ENCODE measurements at regions of chr6 and their contacts with region 1.

Region 1: DNA sequence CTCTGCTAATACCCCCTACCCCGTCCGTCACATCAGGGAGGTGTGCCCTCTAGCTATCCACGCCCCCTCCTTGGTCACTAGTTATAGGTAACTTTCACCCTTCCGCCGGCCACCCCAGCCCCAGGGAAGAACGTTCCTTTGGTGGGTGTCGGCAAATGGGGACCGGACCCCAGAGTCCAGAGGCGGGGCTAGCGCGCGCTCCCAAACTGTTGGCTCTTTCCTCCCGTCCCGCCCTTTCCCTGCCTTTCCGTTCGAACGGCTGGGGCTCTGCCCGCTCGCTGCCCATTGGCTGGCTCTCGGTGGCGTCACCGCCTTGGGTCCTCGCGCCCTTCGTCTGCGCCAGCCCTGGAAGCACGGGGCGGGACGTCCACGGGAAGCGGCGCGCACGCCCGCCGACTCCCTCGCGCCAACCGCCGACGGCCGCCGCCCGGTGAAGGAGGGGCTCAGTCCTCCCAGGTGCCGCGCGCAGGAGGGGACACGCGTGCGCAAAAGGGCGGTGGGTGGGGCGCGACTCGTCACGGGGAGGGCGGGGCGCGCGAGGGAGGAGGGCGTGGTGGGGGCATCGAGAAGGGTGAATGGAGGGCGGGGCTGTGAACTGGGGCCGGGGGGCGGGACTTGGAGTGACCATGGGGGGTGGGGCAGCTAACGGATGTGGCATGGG is 634 bp upstream of the PHF1 start:
- DNase-seq: peak; percentile 94 to 98 (median 95)
- ATAC-seq: peak; percentile 82
- H3K4me3 ChIP-seq: peak overlapping the region; percentile 78
- H3K4me3 Mint-ChIP-seq: peak overlapping the region; percentile 85 to 95 (median 90)
- H3K27ac ChIP-seq: peak overlapping the region; percentile 100
- H3K27ac Mint-ChIP-seq: peak overlapping the region; percentile 65 to 99 (median 97)
- H3K4me1 ChIP-seq: peaks cover 35 to 36% of the 10 kb centered on the region in 2 donors
- H3K4me1 Mint-ChIP-seq: peaks cover 25 to 60% (median 46%) of the 10 kb centered on the region in 7 donors
- H3K27me3 ChIP-seq: no peaks in the 10 kb centered on the region
- H3K27me3 Mint-ChIP-seq: no peaks in the 10 kb centered on the region

Region 2: DNA sequence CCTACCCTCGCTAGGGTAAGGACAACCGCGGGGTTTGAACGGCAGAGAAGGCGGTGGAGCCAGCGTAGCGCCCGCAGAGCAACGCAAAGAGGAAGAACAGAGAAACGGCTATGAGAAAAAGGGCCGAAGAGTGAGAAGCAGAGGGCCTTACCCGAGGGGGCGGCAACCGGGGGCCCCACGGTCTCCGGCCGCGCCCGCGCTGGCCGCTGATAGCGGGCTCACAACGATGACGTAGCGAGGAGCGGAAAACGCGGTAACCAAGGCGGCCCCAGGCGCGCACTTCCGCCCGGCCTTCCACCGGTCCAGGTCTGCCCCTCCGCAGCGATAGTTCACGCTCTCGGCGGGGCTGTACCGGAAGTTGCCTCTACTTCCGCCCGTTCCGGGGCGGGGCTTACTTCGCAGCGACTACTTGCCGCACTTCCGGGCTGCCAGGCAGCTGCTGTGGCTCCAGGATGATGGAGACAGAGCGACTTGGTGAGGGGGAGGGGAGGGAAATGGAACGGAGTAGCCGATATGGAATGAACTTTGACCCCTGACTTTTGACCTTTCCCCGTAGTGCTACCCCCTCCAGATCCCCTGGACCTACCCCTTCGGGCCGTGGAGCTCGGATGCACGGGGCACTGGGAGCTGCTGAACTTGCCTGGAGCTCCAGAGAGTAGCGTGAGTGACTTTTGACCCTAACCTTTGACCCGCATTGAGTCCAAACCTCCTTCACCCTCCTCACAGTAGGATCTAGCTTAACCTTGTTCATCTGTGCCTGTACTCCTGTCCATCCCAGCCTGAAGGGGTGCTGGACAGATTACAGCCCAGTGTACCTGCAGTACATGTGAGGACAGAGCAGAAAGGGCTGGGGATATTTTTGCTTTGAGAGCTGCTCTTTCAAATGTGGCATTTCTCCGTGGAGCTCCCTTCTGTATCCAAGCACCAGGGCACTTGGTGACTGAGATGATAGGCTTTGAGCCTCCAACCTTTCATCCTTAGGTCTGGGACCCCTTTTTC is 1451.1 kb before region 1 on chr6 and contains the starts of genes NELFE and SKIC2:
- CTCF ChIA-PET with region 1: no interaction called
- POLR2A ChIA-PET with region 1: no interaction called
- intact Hi-C with region 1: loop called in 1 of 2 experiments (anchors 5 kb)
- DNase-seq: peak; percentile 94 to 99 (median 98)
- ATAC-seq: peak; percentile 98
- H3K4me3 ChIP-seq: peak within 1 kb of the TSS; percentile 89
- H3K4me3 Mint-ChIP-seq: peak within 1 kb of the TSS; percentile 91 to 100 (median 97)
- H3K27ac ChIP-seq: peak within 1 kb of the TSS; percentile 99
- H3K27ac Mint-ChIP-seq: peak within 1 kb of the TSS; percentile 91 to 99 (median 97)
- H3K4me1 ChIP-seq: peaks cover 18 to 20% of the 10 kb centered on the region in 2 donors
- H3K4me1 Mint-ChIP-seq: peaks cover 23 to 50% (median 39%) of the 10 kb centered on the region in 7 donors
- H3K27me3 ChIP-seq: no peaks in the 10 kb centered on the region
- H3K27me3 Mint-ChIP-seq: no peaks in the 10 kb centered on the region
- total RNA-seq, gene NELFE: 47.5 to 71.7 (median 59.1) TPM
- total RNA-seq, gene SKIC2: 85.6 to 139 (median 101) TPM

Region 3: DNA sequence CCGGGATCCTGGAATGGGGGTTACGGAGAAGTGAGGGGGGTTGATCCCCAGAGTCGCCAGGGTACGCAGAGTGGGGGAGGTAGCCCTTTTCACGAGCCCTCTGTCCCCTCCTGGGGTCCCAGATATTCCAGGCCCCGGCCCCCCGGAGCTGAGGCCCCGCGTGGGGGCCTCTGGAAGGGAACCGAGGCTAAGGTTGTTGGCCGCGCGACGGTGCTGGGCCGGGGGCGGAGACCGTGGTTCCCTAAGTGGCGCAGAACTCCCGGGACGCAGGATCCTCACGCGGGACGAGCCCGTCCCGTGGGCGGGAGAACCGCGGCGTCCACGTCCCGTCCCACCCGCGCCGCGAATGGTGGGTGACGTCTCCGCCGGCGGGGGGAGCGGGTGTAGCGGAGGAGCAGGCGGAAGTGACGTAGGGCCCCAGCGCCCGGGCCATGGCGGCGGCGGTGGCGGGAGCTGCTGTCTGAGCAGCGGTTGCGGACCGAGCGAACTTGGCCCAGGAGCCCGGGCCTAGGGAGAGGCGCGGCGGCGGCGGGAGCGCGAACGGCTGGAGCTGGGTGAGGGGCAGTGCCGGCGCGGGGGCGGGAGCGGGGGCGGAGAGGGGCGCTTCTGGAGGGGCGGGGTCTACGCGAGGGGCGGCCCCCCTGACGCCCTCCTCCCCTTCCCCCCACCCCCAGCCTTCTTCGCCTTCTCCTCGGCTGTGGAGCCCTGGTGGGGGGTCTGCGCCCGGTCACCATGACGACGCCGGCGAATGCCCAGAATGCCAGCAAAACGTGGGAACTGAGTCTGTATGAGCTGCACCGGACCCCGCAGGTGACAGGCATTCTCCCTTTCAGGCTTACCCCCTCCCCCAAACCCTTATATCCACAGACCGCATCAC is 201.9 kb before region 1 on chr6 and contains the start of gene RING1:
- CTCF ChIA-PET with region 1: no interaction called
- POLR2A ChIA-PET with region 1: no interaction called
- intact Hi-C with region 1: loop called in 1 of 2 experiments (anchors 1 kb)
- DNase-seq: peak; percentile 80 to 93 (median 87)
- ATAC-seq: peak; percentile 79
- H3K4me3 ChIP-seq: peak within 1 kb of the TSS; percentile 92
- H3K4me3 Mint-ChIP-seq: peak within 1 kb of the TSS; percentile 83 to 97 (median 90)
- H3K27ac ChIP-seq: peak within 1 kb of the TSS; percentile 98
- H3K27ac Mint-ChIP-seq: peak within 1 kb of the TSS; percentile 87 to 96 (median 95)
- H3K4me1 ChIP-seq: peaks cover 23 to 34% of the 10 kb centered on the region in 2 donors
- H3K4me1 Mint-ChIP-seq: peaks cover 43 to 58% (median 52%) of the 10 kb centered on the region in 7 donors
- H3K27me3 ChIP-seq: peaks cover 0 to 3% of the 10 kb centered on the region in 2 donors
- H3K27me3 Mint-ChIP-seq: peaks cover 0 to 15% (median 6%) of the 10 kb centered on the region in 5 donors
- total RNA-seq, gene RING1: 36.2 to 47.2 (median 44.5) TPM

Region 4: DNA sequence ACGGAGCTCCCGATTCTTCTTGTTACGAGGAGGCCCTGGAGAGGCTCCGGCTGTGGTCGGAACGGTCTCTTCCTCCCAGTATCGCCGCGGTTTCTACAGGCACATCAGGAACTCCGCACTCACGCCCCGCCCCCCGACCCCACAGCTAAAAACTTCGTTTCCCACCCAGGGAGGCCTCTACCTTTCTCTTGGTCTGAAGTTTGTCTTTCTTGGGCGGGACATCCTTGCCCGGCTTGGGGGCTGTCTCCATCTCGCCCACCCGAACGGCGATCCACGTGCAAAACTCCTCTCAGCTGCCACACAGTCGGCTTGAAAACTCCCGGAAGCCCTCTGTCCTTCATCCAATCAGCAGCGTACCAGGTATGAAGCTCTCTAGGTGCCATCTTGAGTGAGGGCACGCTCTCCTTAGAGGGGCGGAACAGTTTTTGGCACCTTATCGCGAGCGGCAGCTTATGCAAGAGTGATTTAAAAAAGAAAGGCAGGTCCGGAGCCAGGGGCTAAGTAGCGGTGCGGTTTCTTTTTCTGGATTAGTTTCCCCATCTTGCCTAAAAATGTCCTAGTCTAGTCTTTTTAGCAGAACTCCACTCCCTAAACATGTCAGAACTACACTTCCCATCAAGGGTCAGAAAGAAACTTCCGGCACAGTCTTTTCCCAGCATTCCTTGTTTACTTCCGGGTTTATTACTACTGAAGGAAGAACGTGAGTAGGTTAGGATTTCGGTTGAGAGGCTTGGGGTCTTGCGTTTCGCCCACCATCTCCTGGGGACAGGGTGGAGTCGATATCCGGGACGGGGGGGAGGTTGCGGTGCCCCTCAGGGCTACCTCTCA is 121.0 kb before region 1 on chr6 and contains the starts of genes PFDN6 and WDR46:
- CTCF ChIA-PET with region 1: no interaction called
- POLR2A ChIA-PET with region 1: no interaction called
- intact Hi-C with region 1: loop called in 1 of 2 experiments (anchors 1 kb)
- DNase-seq: peak; percentile 55 to 90 (median 87)
- ATAC-seq: peak; percentile 96
- H3K4me3 ChIP-seq: peak within 1 kb of the TSS; percentile 97
- H3K4me3 Mint-ChIP-seq: peak within 1 kb of the TSS; percentile 89 to 99 (median 98)
- H3K27ac ChIP-seq: peak within 1 kb of the TSS; percentile 80
- H3K27ac Mint-ChIP-seq: peak within 1 kb of the TSS; percentile 89 to 98 (median 92)
- H3K4me1 ChIP-seq: peaks cover 19 to 20% of the 10 kb centered on the region in 2 donors
- H3K4me1 Mint-ChIP-seq: peaks cover 32 to 51% (median 45%) of the 10 kb centered on the region in 7 donors
- H3K27me3 ChIP-seq: no peaks in the 10 kb centered on the region
- H3K27me3 Mint-ChIP-seq: no peaks in the 10 kb centered on the region
- total RNA-seq, gene PFDN6: 14.6 to 73.2 (median 35.5) TPM
- total RNA-seq, gene WDR46: 25.3 to 62.7 (median 52.7) TPM

Region 5: GRCh38 chr6:33323623-33323948 is 86.6 kb before region 1 on chr6:
- CTCF ChIA-PET with region 1: no interaction called
- POLR2A ChIA-PET with region 1: no interaction called
- intact Hi-C with region 1: loop called (anchors 1 kb)
- DNase-seq: peak in 1 of 9 donors; percentile 26
- ATAC-seq: no peak
- H3K4me3 ChIP-seq: peak overlapping the region; percentile 64
- H3K4me3 Mint-ChIP-seq: peak overlapping the region; percentile 81 to 100 (median 98)
- H3K27ac ChIP-seq: peak overlapping the region; percentile 84
- H3K27ac Mint-ChIP-seq: peak overlapping the region; percentile 89 to 99 (median 97)
- H3K4me1 ChIP-seq: peaks cover 41% of the 10 kb centered on the region in 2 donors
- H3K4me1 Mint-ChIP-seq: peaks cover 34 to 59% (median 53%) of the 10 kb centered on the region in 7 donors
- H3K27me3 ChIP-seq: no peaks in the 10 kb centered on the region
- H3K27me3 Mint-ChIP-seq: peaks cover 0 to 4% (median 0%) of the 10 kb centered on the region in 5 donors

Region 6: DNA sequence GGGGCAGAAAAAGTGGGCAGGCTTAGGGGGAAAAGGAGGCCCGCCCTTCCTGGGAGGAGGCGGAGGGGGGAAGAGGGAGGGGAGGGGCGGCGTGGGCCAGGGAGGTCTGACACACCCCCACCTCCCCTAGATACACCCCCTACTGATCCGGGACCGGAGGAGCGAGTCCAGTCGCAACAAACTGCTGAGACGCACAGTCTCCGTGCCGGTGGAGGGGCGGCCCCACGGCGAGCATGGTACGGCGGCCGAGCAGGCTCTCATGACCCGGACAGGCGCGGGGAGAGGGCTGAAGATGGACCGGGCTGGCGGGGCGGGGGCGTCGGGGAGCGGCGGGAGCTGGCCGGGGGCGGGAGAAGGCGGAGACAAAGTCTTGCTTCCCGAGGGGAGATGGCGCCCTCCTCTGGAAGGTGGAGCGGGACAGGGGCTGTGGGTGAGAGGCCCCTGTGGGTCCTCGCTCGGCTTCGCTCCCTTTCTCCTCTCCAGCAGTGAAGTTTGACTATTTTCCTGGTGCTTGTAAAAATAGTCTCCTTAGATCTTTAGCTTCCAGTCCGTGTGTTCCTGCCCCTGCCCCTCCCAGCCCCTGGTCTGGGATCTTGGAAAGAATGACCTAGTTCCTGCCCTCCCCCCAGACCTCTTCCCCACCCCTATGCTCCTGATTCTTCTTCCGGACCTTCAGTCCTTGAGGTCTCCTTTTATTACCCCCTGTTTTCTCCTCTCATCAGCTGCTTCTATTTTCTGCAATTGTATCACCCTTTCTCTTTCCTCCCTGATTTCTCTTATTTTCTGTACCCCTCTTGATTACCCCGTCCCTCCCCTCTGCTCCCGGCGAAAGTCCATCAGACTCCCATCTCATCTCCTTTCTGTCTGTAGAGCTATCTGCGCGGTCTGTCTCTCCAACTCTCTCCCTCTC is 15.7 kb after region 1 on chr6:
- CTCF ChIA-PET with region 1: interaction called, 4 read pairs
- POLR2A ChIA-PET with region 1: interaction called, 39 read pairs
- intact Hi-C with region 1: loop called (anchors 1 kb)
- DNase-seq: peak; percentile 57 to 85 (median 74)
- ATAC-seq: peak; percentile 72
- H3K4me3 ChIP-seq: peak overlapping the region; percentile 73
- H3K4me3 Mint-ChIP-seq: peak overlapping the region; percentile 84 to 98 (median 95)
- H3K27ac ChIP-seq: peak overlapping the region; percentile 88
- H3K27ac Mint-ChIP-seq: peak overlapping the region; percentile 88 to 99 (median 95)
- H3K4me1 ChIP-seq: peaks cover 43 to 46% of the 10 kb centered on the region in 2 donors
- H3K4me1 Mint-ChIP-seq: peaks cover 64 to 89% (median 82%) of the 10 kb centered on the region in 7 donors
- H3K27me3 ChIP-seq: no peaks in the 10 kb centered on the region
- H3K27me3 Mint-ChIP-seq: no peaks in the 10 kb centered on the region

Region 7: DNA sequence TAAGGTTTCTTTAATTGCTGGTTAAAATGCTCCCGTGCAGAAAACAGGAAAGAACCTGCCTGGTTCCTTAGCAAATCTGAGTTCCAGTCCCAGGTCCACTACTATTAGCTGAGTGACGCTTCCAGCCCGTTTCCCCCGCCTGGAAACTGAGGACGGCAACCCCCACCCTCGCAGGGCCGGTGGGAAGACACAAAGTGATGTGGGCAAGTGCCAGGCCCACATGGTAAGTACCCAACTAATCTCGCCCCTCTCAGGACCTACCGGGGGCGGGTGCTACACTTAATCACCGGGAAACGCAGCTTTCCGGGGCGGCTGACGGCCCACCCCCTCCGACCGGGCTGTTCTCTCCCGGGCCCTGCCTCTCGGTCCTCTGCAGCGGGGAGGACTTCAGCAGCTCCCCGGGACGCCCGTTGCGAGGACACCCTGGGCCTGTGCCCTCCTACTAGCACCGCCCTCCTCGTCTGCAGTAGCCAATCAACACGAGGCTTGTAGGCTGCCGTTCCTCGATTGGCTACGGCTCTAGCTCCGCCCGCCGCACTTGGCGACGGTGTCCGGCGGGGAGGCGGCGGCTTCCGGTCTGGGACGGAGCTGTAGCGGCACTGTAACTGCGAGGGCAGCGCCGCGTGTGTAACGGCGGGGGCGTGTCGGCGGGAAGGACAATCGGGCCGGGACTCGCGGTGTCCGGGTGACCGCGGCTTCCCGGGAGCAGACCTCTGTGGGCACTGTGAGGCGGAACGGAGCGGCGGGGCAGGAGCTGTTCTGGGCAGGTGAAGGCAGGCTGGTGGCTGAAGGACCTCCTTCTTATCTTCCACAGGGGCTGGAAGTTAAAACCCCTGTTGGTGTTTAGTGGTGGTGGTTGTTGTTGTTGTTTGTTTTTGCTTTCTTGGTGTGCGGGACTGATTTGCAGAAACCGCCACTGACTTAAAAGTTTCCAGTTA is 44.1 kb after region 1 on chr6 and contains the start of gene ZBTB9:
- CTCF ChIA-PET with region 1: no interaction called
- POLR2A ChIA-PET with region 1: interaction called, 3 read pairs
- intact Hi-C with region 1: loop called in 1 of 2 experiments (anchors 1 kb)
- DNase-seq: peak; percentile 80 to 93 (median 92)
- ATAC-seq: peak; percentile 100
- H3K4me3 ChIP-seq: peak within 1 kb of the TSS; percentile 93
- H3K4me3 Mint-ChIP-seq: peak within 1 kb of the TSS; percentile 88 to 99 (median 95)
- H3K27ac ChIP-seq: peak within 1 kb of the TSS; percentile 88
- H3K27ac Mint-ChIP-seq: peak within 1 kb of the TSS; percentile 86 to 98 (median 92)
- H3K4me1 ChIP-seq: peaks cover 12 to 22% of the 10 kb centered on the region in 2 donors
- H3K4me1 Mint-ChIP-seq: peaks cover 21 to 57% (median 45%) of the 10 kb centered on the region in 7 donors
- H3K27me3 ChIP-seq: no peaks in the 10 kb centered on the region
- H3K27me3 Mint-ChIP-seq: no peaks in the 10 kb centered on the region
- total RNA-seq, gene ZBTB9: 3.3 to 14.0 (median 9.8) TPM

Region 8: DNA sequence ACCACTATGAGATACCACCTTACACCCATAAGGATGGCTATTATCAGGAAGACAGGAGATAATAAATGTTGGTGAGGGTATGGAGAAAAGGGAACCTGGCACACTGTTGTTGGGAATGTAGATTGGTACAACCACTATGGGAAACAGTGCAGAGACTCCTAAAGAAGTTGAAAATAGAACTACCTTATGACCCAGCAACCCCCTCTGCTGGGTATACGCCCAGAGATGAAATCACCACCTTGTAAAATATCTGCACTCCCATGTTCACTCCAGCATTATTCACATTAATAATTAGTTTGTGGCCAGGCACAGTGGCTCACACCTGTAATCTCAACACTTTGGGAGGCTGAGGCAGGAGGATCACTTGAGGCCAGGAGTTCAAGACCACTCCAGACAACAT is 71.0 kb after region 1 on chr6:
- CTCF ChIA-PET with region 1: no interaction called
- POLR2A ChIA-PET with region 1: no interaction called
- intact Hi-C with region 1: no loop called
- DNase-seq: peak in 5 of 9 donors; percentile 2 to 19 (median 9)
- ATAC-seq: no peak
- H3K4me3 ChIP-seq: no peak overlapping the region
- H3K4me3 Mint-ChIP-seq: no peak overlapping the region
- H3K27ac ChIP-seq: no peak overlapping the region
- H3K27ac Mint-ChIP-seq: no peak overlapping the region
- H3K4me1 ChIP-seq: no peaks in the 10 kb centered on the region
- H3K4me1 Mint-ChIP-seq: no peaks in the 10 kb centered on the region
- H3K27me3 ChIP-seq: no peaks in the 10 kb centered on the region
- H3K27me3 Mint-ChIP-seq: peaks cover 0 to 17% (median 0%) of the 10 kb centered on the region in 5 donors

Measured in naive thymus-derived CD4-positive, alpha-beta T cell (primary cell).